Prostate gland (tissue), 2 donors: ENCODE measurements at regions of chr12 and their contacts with region 1.

Region 1: GRCh38 chr12:70733385-70733784 is 96.2 kb upstream of the PTPRB start:
- DNase-seq: peak; percentile 29
- H3K4me3 ChIP-seq: no peak overlapping the region
- H3K27ac ChIP-seq: no peak overlapping the region
- H3K4me1 ChIP-seq: no peaks in the 10 kb centered on the region
- H3K27me3 ChIP-seq: no peaks in the 10 kb centered on the region
- CTCF ChIP-seq: peak in 3 of 4 experiments; percentile 47 to 69 (median 69)
- POLR2A ChIP-seq: no peak

Region 2: DNA sequence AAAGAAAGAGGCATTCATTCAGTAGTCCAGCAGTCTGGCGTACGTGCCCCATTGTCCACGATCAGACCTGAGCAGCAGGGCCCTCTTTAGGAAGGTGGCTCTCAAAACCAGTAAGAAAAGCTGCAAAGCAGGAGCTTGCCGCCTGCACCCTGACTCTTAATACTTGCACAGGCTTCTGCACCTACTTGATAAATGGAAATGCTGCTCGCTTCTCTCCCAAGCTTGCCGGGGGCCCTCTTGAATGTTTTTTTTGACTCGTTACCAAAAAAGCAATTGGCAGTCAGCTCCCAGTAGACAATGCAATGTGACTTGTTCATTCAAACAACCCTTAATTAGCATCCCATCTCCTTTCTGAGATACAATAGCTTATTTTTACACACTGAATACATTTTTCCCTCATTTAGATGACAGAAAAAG is 68.9 kb before region 1 on chr12:
- intact Hi-C with region 1: no loop called
- DNase-seq: no peak
- H3K4me3 ChIP-seq: no peak overlapping the region
- H3K27ac ChIP-seq: no peak overlapping the region
- H3K4me1 ChIP-seq: no peaks in the 10 kb centered on the region
- H3K27me3 ChIP-seq: no peaks in the 10 kb centered on the region
- CTCF ChIP-seq: no peak
- POLR2A ChIP-seq: no peak

Region 3: GRCh38 chr12:70831538-70831937 is 98.2 kb after region 1 on chr12:
- intact Hi-C with region 1: no loop called
- DNase-seq: no peak
- H3K4me3 ChIP-seq: no peak overlapping the region
- H3K27ac ChIP-seq: no peak overlapping the region
- H3K4me1 ChIP-seq: no peaks in the 10 kb centered on the region
- H3K27me3 ChIP-seq: no peaks in the 10 kb centered on the region
- CTCF ChIP-seq: no peak
- POLR2A ChIP-seq: no peak

Region 4: DNA sequence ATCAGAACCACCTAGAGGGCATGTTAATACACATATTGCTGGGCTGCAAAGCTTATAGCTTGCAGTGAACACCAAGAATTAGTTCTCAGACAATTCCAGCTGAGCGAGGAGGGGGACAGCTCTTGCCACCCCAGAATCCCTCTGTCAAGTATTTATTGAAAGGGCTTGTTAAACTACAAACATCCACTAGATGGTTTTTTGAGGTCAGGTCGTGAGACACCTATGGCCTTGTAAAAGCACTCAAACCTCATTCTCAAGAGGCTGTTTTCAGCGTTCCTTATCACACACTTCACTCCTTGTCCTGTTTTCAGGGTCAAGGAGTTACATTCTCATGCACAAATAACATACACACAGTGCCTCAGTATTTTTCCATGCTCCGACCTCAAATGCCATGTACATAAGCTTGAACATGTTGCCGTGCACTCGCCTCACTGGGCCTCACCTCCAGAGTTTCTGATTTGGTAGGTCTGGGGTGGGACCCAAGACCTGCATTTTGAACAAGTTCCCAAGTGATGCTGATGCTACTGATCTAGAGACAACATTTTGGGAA is 286.0 kb after region 1 on chr12:
- intact Hi-C with region 1: loop called (anchors 5 kb)
- DNase-seq: no peak
- H3K4me3 ChIP-seq: no peak overlapping the region
- H3K27ac ChIP-seq: no peak overlapping the region
- H3K4me1 ChIP-seq: no peaks in the 10 kb centered on the region
- H3K27me3 ChIP-seq: no peaks in the 10 kb centered on the region
- CTCF ChIP-seq: no peak
- POLR2A ChIP-seq: no peak